ENCODE measurements at regions of chr3 and their contacts with region 1.

Region 1: DNA sequence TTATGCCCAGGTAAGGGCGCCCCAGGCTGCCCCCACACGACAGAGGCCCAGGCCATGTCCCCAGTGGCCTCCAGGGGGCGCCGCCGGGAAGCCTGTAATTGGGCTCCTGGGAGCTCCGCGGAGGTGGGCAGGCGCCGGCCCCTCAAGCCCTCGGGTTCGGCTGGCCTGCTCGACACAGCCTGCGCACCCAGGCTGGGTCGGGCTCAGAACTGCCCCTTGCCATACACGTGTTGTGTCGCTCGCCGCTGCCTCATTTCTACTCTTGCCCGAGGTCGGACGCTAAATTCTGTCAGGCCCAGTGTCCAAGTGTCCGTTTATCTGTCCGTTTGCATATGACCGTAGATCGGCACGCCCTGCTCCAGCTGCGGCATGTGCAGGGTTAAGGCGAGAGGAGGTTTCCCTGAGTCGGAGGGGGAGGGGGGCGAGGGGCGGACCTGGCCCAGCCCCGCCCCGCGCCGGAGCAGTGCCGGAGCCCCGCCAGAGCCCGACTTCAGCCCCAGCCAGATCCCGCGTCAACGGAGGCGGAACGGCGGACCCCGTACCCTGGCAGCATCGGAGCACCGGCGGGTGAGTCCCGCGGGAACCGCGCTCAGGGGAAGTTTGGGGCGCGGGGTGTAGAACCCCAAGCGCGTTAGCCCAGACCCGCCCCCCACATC is at the start of gene KLHDC8B:
- DNase-seq: peak; percentile 82 to 91
- ATAC-seq: peak; percentile 84
- total RNA-seq, gene KLHDC8B: 4.6 to 12.5 TPM

Region 2: GRCh38 chr3:49021813-49022687 is 149.2 kb before region 1 on chr3 and contains the start of gene NDUFAF3:
- intact Hi-C with region 1: no loop called
- DNase-seq: peak; percentile 90 to 94
- ATAC-seq: peak; percentile 62
- total RNA-seq, gene NDUFAF3: 65.2 to 70.1 TPM

Region 3: DNA sequence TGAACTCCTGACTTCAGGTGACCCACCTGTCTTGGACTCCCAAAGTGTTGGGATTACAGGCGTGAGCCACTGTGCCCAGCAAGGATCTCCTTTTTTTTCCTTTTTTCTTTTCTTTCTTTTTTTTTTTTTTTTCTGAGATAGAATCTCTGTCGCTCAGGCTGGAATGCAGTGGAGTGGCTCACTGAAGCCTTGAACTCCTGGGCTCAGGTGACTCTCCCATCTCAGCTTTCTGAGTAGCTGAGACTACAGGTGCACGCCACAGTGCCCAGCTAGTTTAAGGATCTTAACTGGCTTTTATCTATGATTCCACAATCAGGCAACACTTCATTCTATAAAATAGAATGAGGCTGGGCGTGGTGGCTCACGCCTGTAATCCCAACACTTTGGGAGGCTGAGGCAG is 274.1 kb after region 1 on chr3:
- intact Hi-C with region 1: loop called in 1 of 2 experiments (anchors 5 kb)
- DNase-seq: no peak
- ATAC-seq: no peak

Measured in left colon (tissue), 2 donors.